Pancreas (tissue), 10 donors: ENCODE measurements at regions of chr2 and their contacts with region 1.

Region 1: GRCh38 chr2:112626604-112627059 is 19.1 kb upstream of the SLC20A1 start:
- DNase-seq: peak; percentile 18 to 82 (median 62)
- ATAC-seq: peak; percentile 81 to 89 (median 86)
- H3K4me3 ChIP-seq: no peak overlapping the region
- H3K27ac ChIP-seq: peak overlapping the region in 2 of 4 donors; percentile 14 to 32
- H3K4me1 ChIP-seq: no peaks in the 10 kb centered on the region
- H3K27me3 ChIP-seq: no peaks in the 10 kb centered on the region
- CTCF ChIP-seq: peak; percentile 21 to 77 (median 68)

Region 2: GRCh38 chr2:112692496-112692911 is 65.9 kb after region 1 on chr2:
- intact Hi-C with region 1: loop called in 2 of 3 experiments (anchors 5 to 10 kb)
- DNase-seq: peak in 1 of 6 donors; percentile 42
- ATAC-seq: peak in 3 of 4 donors; percentile 60 to 88 (median 74)
- H3K4me3 ChIP-seq: no peak overlapping the region
- H3K27ac ChIP-seq: no peak overlapping the region
- H3K4me1 ChIP-seq: no peaks in the 10 kb centered on the region
- H3K27me3 ChIP-seq: no peaks in the 10 kb centered on the region
- CTCF ChIP-seq: no peak

Region 3: GRCh38 chr2:112726497-112727190 is 100.0 kb after region 1 on chr2:
- intact Hi-C with region 1: loop called in 1 of 3 experiments (anchors 5 kb)
- DNase-seq: peak; percentile 73 to 96 (median 90)
- ATAC-seq: peak; percentile 95 to 98 (median 96)
- H3K4me3 ChIP-seq: no peak overlapping the region
- H3K27ac ChIP-seq: no peak overlapping the region
- H3K4me1 ChIP-seq: no peaks in the 10 kb centered on the region
- H3K27me3 ChIP-seq: no peaks in the 10 kb centered on the region
- CTCF ChIP-seq: peak; percentile 89 to 98 (median 94)

Region 4: DNA sequence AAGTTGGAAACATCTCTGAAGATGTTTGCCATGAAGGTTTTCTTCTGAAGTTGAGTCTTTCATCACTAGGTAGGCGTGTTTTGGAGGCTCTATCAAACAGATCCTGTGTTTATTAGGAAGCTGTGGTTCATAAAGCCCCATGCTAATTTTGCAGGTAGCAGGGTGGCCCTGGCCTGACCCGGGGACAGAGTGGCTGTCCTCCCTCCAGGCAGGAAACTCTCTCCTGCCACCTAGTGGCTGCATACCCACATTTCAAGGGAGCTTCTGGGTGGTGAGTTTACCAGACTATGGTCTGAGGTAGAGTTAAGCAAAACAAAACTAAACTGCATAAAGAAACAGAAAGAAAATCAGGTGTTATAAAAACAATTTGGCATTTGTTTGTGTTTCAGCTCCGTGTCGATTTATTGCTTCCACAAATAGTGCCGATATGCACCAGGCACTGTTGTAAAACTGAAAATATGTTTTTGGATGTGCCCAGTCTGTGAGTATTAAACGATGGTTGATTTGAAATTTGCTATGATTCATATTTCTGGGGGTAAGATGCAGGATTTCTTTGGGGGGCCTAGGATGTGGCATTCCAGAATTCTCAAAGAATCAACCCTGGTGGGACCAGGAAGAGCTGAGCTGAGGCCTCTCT is 258.4 kb after region 1 on chr2:
- intact Hi-C with region 1: no loop called
- DNase-seq: peak in 5 of 6 donors; percentile 32 to 79 (median 63)
- ATAC-seq: peak; percentile 74 to 96 (median 88)
- H3K4me3 ChIP-seq: no peak overlapping the region
- H3K27ac ChIP-seq: no peak overlapping the region
- H3K4me1 ChIP-seq: no peaks in the 10 kb centered on the region
- H3K27me3 ChIP-seq: no peaks in the 10 kb centered on the region
- CTCF ChIP-seq: peak; percentile 59 to 80 (median 73)